ENCODE measurements at regions of chr9 and their contacts with region 1.

Region 1: DNA sequence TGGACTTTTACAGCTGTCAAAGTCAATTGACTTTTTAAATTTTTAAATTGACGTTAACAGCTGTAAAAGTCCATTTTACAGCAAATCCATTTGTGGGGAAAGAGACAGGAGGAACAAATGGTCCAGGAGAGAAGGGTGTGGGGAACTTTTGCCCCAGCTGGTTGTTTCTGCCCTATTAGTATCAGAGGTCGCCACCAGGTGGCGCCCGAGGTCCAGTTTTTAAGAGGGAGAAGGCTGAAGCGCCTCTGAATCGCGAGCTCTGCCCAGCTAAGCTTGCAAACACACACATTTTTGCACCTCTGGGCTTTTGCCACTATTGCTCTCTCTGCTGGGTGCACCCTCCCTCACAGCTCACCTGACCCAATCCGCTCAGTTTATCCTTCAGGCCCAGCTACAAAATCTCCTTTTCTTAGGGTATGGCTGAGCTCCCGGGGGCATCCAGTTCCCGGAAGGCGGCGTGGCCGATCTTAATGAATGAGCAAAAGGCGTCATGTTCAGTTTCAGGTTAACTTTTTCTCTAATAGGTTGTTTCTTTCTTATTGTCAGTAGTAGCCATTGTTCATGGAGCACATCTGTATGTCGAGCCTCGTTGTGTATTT is 6.3 kb upstream of the TTLL11 start:
- DNase-seq: peak; percentile 67 to 74 (median 71)
- H3K4me3 ChIP-seq: no peak overlapping the region
- H3K4me3 Mint-ChIP-seq: peak overlapping the region in 6 of 8 donors; percentile 4 to 77 (median 48)
- H3K27ac ChIP-seq: no peak overlapping the region
- H3K27ac Mint-ChIP-seq: no peak overlapping the region
- H3K4me1 ChIP-seq: peaks cover 8% of the 10 kb centered on the region
- H3K4me1 Mint-ChIP-seq: peaks cover 10 to 21% (median 13%) of the 10 kb centered on the region in 4 donors
- H3K27me3 ChIP-seq: no peaks in the 10 kb centered on the region
- H3K27me3 Mint-ChIP-seq: peaks cover 4 to 6% of the 10 kb centered on the region in 2 donors

Region 2: GRCh38 chr9:122087406-122088200 is 11.8 kb before region 1 on chr9:
- CTCF ChIA-PET with region 1: interaction called, 38 read pairs
- POLR2A ChIA-PET with region 1: no interaction called
- intact Hi-C with region 1: no loop called
- DNase-seq: no peak
- H3K4me3 ChIP-seq: no peak overlapping the region
- H3K4me3 Mint-ChIP-seq: no peak overlapping the region
- H3K27ac ChIP-seq: no peak overlapping the region
- H3K27ac Mint-ChIP-seq: no peak overlapping the region
- H3K4me1 ChIP-seq: peaks cover 17% of the 10 kb centered on the region
- H3K4me1 Mint-ChIP-seq: peaks cover 26 to 35% (median 30%) of the 10 kb centered on the region in 4 donors
- H3K27me3 ChIP-seq: no peaks in the 10 kb centered on the region
- H3K27me3 Mint-ChIP-seq: no peaks in the 10 kb centered on the region

Region 3: DNA sequence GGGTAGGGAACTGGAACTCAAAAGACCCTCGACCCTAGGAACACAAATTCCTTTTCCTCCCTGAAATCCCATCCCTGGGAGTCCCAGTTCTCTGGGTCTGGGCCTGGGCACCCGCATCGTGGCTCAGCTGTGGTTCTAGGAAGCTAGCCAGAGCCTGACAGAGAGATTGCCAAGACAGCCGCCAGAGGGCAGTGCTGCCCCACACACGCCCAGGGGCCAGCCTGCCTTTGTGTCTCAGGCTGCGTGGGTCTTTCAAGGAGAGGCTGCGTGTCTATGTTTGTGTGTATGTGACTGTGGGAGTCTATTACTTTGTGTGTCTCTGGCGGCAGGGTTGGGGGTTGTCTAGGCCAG is 25.8 kb after region 1 on chr9:
- CTCF ChIA-PET with region 1: interaction called, 160 read pairs
- POLR2A ChIA-PET with region 1: no interaction called
- intact Hi-C with region 1: loop called (anchors 1 kb)
- DNase-seq: peak; percentile 65 to 75 (median 68)
- H3K4me3 ChIP-seq: no peak overlapping the region
- H3K4me3 Mint-ChIP-seq: peak overlapping the region in 6 of 8 donors; percentile 42 to 71 (median 60)
- H3K27ac ChIP-seq: no peak overlapping the region
- H3K27ac Mint-ChIP-seq: peak overlapping the region in 1 of 7 donors; percentile 26
- H3K4me1 ChIP-seq: peaks cover 7% of the 10 kb centered on the region
- H3K4me1 Mint-ChIP-seq: peaks cover 11 to 25% (median 18%) of the 10 kb centered on the region in 4 donors
- H3K27me3 ChIP-seq: peaks cover 11% of the 10 kb centered on the region
- H3K27me3 Mint-ChIP-seq: peaks cover 21 to 28% of the 10 kb centered on the region in 2 donors

Region 4: GRCh38 chr9:122151267-122151828 is 52.0 kb after region 1 on chr9:
- CTCF ChIA-PET with region 1: interaction called, 16 read pairs
- POLR2A ChIA-PET with region 1: no interaction called
- intact Hi-C with region 1: no loop called
- DNase-seq: no peak
- H3K4me3 ChIP-seq: no peak overlapping the region
- H3K4me3 Mint-ChIP-seq: no peak overlapping the region
- H3K27ac ChIP-seq: no peak overlapping the region
- H3K27ac Mint-ChIP-seq: peak overlapping the region in 1 of 7 donors; percentile 1
- H3K4me1 ChIP-seq: no peaks in the 10 kb centered on the region
- H3K4me1 Mint-ChIP-seq: peaks cover 11 to 18% (median 16%) of the 10 kb centered on the region in 4 donors
- H3K27me3 ChIP-seq: no peaks in the 10 kb centered on the region
- H3K27me3 Mint-ChIP-seq: no peaks in the 10 kb centered on the region

Region 5: DNA sequence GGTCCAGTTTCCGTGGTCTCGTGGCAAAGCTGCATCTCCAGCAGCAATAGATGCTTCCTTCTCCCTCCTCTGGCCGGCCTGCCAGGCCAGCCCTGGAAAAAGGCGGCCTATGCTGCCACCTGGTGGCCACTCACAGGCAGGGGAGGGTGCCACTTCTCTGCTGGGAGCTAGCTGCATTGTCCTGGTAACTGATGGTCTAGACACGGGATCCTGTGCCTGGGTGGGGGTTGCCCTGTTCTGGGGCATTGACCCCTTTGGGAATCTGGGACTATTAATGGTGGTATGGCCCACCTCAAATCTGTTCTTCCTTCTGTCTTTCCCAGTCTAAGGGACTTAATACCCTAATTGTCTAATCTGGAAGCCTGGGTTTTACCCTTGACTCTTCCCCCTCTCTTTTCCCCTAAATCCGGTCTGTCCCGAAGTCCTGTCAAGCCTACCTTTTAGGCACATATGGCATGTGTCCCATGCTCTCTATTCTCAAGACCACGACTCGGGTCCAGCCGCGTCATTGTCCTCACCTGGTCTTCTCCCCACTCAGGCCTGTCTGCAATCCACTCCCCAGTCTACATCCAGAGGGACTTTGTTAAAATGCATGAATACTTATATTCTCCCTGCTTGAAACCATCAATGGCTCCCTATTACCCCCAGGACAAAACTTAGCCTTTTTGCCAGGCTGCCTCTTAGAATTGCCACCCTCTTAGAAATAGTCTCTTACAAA is 251.4 kb after region 1 on chr9:
- CTCF ChIA-PET with region 1: interaction called, 143 read pairs
- POLR2A ChIA-PET with region 1: interaction called, 4 read pairs
- intact Hi-C with region 1: loop called (anchors 1 kb)
- DNase-seq: peak; percentile 62 to 70 (median 65)
- H3K4me3 ChIP-seq: no peak overlapping the region
- H3K4me3 Mint-ChIP-seq: peak overlapping the region in 1 of 8 donors; percentile 23
- H3K27ac ChIP-seq: no peak overlapping the region
- H3K27ac Mint-ChIP-seq: no peak overlapping the region
- H3K4me1 ChIP-seq: peaks cover 7% of the 10 kb centered on the region
- H3K4me1 Mint-ChIP-seq: peaks cover 0 to 7% (median 3%) of the 10 kb centered on the region in 4 donors
- H3K27me3 ChIP-seq: peaks cover 13% of the 10 kb centered on the region
- H3K27me3 Mint-ChIP-seq: peaks cover 13 to 41% of the 10 kb centered on the region in 2 donors

Region 6: GRCh38 chr9:122810306-122810946 is 711.1 kb after region 1 on chr9:
- CTCF ChIA-PET with region 1: interaction called, 50 read pairs
- POLR2A ChIA-PET with region 1: no interaction called
- intact Hi-C with region 1: loop called (anchors 1 kb)
- DNase-seq: peak; percentile 66 to 74 (median 71)
- H3K4me3 ChIP-seq: no peak overlapping the region
- H3K4me3 Mint-ChIP-seq: no peak overlapping the region
- H3K27ac ChIP-seq: no peak overlapping the region
- H3K27ac Mint-ChIP-seq: no peak overlapping the region
- H3K4me1 ChIP-seq: peaks cover 11% of the 10 kb centered on the region
- H3K4me1 Mint-ChIP-seq: peaks cover 9 to 32% (median 22%) of the 10 kb centered on the region in 4 donors
- H3K27me3 ChIP-seq: no peaks in the 10 kb centered on the region
- H3K27me3 Mint-ChIP-seq: no peaks in the 10 kb centered on the region